ENCODE measurements at regions of chr2 and their contacts with region 1.

Region 1: DNA sequence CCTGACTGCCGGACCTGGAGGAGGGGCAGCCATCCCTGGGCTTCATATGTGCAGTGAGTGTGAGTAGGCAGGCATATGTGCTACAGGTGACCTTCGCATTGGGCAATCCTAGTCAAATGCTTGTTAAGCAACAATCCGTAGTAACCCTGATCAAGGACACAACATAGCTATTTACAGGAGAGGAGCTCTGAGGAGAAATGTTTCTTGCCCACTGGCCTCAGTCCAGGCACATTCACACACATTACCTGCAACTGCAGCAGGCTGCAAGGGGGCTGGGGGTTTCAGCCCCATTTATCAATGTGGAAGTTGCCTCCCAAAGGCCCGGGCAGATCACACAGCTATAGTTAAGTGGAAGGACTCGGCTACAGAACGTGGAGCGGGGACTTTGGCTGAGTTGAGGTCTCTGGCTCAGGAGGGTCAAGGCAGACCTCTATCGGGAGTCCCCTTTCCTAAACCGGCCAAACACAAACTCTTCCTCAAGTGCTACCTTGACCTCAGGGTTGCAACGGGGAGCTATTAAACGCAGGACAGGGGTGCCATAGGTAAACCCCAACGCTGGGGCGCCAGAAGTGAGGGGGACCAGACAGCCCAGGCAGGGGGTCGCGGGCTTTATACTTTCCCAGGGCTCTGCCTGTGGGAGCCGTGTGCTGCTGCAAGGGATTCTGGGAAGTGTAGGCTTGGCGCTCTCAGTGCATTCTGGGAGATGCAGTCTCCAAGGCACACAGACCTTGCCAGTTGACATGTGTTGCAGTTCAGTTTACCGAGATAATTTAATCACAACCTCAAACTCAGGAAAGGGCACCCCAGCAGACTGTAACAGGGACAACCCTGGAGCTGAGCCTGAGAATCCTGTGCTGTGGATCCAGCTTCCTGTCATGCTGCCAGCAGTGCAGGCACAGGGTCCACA is 9.4 kb downstream of the KHK start:
- DNase-seq: peak; percentile 65
- ATAC-seq: peak; percentile 94
- H3K4me3 Mint-ChIP-seq: peak overlapping the region; percentile 30
- H3K27ac Mint-ChIP-seq: no peak overlapping the region
- H3K4me1 Mint-ChIP-seq: no peaks in the 10 kb centered on the region
- H3K27me3 Mint-ChIP-seq: no peaks in the 10 kb centered on the region
- CTCF ChIP-seq: no peak

Region 2: GRCh38 chr2:27115485-27115884 is 19.5 kb after region 1 on chr2:
- CTCF ChIA-PET with region 1: interaction called, 14 read pairs
- POLR2A ChIA-PET with region 1: interaction called, 3 read pairs
- intact Hi-C with region 1: no loop called
- DNase-seq: no peak
- ATAC-seq: no peak
- H3K4me3 Mint-ChIP-seq: no peak overlapping the region
- H3K27ac Mint-ChIP-seq: no peak overlapping the region
- H3K4me1 Mint-ChIP-seq: peaks cover 9% of the 10 kb centered on the region
- H3K27me3 Mint-ChIP-seq: peaks cover 23% of the 10 kb centered on the region
- CTCF ChIP-seq: no peak

Region 3: DNA sequence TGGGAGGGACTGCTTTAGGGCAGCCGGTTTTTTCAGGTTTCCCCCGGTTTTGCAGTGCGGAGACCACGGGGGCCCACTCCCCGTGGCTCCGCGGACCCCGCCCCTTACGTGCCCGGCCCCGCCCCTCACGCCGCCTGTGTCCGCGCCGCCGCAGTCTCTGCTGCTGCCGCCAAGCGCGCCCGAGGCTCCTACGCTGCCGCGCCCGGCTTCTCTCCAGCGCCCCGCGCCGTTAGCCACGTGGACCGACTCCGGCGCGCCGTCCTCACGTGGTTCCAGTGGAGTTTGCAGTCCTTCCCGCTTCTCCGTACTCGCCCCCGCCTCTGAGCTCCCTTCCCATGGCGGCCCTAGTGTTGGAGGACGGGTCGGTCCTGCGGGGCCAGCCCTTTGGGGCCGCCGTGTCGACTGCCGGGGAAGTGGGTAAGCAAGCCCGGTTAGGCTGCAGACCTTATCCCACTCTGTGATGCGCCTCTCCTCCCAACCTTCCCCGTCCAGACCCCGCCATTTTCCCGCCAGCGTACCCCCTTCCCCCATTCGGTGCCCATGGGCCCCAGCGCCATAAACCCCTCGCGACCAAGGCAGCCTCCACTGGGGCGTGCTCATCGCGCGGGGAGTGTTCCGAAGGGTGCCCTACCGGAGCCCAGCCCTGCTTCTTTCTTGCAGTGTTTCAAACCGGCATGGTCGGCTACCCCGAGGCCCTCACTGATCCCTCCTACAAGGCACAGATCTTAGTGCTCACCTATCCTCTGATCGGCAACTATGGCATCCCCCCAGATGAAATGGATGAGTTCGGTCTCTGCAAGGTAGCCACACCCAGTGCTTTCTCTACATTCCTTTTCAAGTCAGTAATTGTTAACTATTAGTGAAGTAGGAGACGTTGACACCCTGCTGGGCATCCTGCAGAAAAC is 121.5 kb after region 1 on chr2 and contains the start of gene CAD:
- CTCF ChIA-PET with region 1: interaction called, 4 read pairs
- POLR2A ChIA-PET with region 1: no interaction called
- intact Hi-C with region 1: loop called (anchors 10 kb)
- DNase-seq: peak; percentile 92
- ATAC-seq: peak; percentile 94
- H3K4me3 Mint-ChIP-seq: peak within 1 kb of the TSS; percentile 93
- H3K27ac Mint-ChIP-seq: peak within 1 kb of the TSS; percentile 88
- H3K4me1 Mint-ChIP-seq: peaks cover 50% of the 10 kb centered on the region
- H3K27me3 Mint-ChIP-seq: no peaks in the 10 kb centered on the region
- CTCF ChIP-seq: no peak
- total RNA-seq, gene CAD: 125 to 127 TPM